Left cardiac atrium (tissue), 4 donors: ENCODE measurements at regions of chr3 and their contacts with region 1.

Region 1: GRCh38 chr3:108090701-108091451 is at the start of gene CD47:
- DNase-seq: peak; percentile 95
- ATAC-seq: peak; percentile 97
- total RNA-seq, gene CD47: 75.0 to 93.3 TPM

Region 2: DNA sequence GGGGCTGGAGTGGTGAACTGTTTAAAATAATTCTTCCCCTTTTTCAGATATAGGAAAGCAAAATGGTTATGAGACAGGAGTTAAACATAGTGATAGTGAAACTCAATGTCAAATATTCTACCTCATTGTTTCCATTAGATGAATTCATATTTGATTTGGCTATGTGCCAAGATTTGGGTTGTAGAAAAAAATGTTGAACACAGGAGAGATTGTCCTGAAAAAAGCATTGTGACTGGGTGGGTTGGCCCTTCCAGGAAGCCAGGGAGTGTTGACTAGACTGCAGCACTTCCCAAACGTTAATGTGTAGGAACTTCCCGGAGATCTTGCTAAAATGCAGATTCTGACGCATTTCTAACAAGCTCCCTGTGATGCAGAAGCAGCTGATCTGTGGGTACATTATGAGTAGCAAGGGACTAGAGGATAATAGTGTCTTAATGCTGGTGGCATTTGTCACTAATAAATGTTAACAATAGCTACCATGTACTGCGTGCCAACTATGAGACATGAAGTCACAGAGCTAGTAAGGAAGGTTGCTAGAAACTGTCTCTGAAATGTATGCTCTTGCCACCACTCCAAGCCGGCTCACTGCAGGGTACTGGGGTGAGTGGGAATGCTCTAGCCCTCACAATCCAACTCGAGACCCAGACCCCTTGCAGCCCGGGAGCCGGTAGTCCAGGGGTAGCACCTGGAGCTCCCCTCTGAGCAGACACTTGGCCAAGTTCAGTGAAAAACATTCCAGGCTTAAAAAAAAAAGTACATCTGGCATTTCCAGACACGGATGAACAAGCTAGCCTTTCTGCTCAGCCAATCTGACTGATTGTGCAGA is 120.7 kb before region 1 on chr3:
- intact Hi-C with region 1: loop called in 1 of 2 experiments (anchors 10 kb)
- DNase-seq: no peak
- ATAC-seq: peak; percentile 34 to 63

Region 3: DNA sequence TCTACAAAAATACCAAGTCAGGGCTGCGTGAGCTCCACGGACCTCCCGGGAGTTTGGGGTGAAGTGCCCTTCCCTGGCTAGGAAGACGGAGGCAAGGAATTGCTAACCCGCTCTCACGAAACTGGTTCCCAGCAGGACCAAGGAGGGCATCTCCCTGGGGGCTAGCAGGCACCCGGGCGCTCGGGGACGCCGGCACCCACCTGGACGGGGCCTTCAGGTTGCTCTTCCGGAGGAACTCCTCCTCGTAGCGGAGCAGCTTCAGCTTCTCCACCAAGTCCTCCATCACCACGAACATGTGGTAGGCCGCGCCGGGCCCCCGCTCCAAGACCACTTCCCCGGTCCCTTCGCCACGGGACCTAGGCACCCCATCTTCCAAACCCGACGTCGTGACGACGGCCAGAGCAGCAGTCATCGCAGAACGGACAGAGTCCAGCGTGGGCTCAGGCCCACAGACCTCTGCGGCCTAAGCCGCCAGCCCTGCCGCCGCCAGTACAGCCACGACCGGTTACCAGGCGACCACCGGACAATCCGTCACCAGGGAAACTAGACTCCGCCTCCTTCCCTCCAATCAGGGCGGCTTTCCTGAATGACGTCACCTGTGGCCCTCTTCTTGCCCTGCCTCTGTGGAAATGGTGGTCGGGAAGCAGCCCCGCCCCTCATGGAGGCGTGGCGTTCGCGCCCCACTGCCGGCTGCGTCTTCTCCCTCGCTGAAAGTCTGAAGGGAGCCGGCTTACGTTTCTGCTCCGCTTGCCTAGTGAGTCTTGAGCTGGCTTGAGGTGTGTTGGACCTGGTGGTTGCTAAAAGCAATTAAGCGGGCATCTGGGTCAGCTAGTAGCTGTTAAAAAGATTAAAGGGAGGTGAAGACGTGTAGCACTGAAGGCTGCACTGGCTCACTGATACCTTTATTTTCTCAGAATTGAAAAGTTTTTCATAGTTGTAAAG is 131.3 kb after region 1 on chr3 and contains the start of gene IFT57:
- intact Hi-C with region 1: loop called in 1 of 2 experiments (anchors 10 kb)
- DNase-seq: peak; percentile 97
- ATAC-seq: peak; percentile 99 to 100
- total RNA-seq, gene IFT57: 20.9 to 30.3 TPM